ENCODE measurements at regions of chr4 and their contacts with region 1.

Region 1: GRCh38 chr4:184474263-184475095 is at the start of gene IRF2:
- DNase-seq: peak; percentile 92 to 99 (median 97)
- H3K4me3 ChIP-seq: peak within 1 kb of the TSS; percentile 96 to 100
- H3K4me3 Mint-ChIP-seq: peak within 1 kb of the TSS; percentile 95 to 100 (median 100)
- H3K27ac ChIP-seq: peak within 1 kb of the TSS; percentile 99
- H3K27ac Mint-ChIP-seq: peak within 1 kb of the TSS; percentile 96 to 100 (median 99)
- H3K4me1 ChIP-seq: peaks cover 66% of the 10 kb centered on the region
- H3K4me1 Mint-ChIP-seq: peaks cover 42 to 85% (median 57%) of the 10 kb centered on the region in 4 donors
- H3K27me3 ChIP-seq: no peaks in the 10 kb centered on the region
- H3K27me3 Mint-ChIP-seq: no peaks in the 10 kb centered on the region
- total RNA-seq, gene IRF2: 66.7 to 70.4 TPM

Region 2: DNA sequence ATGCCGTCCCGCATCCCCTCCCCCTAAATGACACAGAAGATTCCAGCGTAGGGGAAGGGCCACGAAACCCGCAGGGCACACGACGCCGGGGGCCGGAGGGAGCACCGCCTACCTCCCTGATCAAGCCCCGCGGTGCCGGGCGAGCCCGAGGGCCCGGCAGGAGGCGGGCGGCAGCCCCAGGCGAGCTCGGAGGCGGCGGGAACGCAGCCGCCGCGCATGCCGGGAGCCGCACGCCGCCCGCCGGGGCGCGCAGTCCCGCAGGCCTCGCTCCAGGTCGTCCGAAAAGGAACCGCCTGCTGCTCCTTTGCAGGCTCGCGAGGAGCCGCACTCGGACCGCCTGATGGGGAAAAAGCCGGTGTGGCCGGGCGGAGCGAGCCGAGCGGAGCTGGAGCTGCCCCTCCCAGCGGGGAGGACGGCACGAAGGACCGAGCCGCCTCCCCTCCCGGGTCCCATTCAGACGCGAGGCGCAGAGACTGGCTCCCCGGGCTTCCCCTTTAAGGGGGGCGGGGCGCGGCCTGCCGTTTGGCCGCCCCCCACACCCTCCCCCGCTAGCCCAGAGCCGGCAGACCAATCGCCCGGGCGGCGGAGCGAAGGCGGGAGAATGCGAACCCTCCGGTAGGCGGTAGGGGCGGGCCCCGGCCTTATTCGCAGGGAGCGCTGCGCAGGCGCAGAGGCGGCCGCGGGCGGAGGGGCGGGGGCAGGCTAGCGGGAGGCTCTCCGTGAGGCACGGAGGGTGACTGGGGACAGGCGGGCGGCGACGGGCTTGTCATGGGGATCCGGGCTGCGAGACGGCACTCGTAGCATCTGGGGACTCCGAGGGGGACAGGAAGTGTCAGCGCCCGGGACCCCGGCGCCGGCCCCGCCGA is 970.2 kb before region 1 on chr4:
- CTCF ChIA-PET with region 1: no interaction called
- POLR2A ChIA-PET with region 1: no interaction called
- intact Hi-C with region 1: loop called (anchors 1 kb)
- DNase-seq: peak; percentile 98 to 100 (median 99)
- H3K4me3 ChIP-seq: peak overlapping the region; percentile 50 to 73
- H3K4me3 Mint-ChIP-seq: peak overlapping the region; percentile 82 to 98 (median 94)
- H3K27ac ChIP-seq: peak overlapping the region; percentile 90
- H3K27ac Mint-ChIP-seq: peak overlapping the region; percentile 89 to 98 (median 95)
- H3K4me1 ChIP-seq: peaks cover 19% of the 10 kb centered on the region
- H3K4me1 Mint-ChIP-seq: peaks cover 9 to 27% (median 23%) of the 10 kb centered on the region in 4 donors
- H3K27me3 ChIP-seq: no peaks in the 10 kb centered on the region
- H3K27me3 Mint-ChIP-seq: no peaks in the 10 kb centered on the region

Region 3: DNA sequence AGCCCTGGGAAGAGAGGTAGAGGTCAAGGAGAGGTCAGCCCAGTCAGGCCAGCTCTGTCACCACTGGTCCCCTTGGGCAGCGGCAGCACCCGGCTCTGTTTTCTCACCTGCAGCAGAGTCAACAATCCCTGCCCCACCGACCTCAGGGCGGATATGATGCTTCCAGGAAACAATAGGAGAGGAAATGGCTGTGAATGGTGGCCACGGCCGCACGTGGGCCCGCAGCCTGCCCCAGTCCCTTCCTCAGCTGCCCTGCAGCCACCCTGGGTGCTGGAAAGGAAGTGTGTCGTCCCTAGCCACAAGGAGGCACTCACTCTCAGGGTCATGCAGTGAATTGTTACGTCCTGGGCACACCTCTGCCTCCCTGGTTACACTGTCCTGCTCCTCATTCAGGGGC is 164.3 kb before region 1 on chr4:
- CTCF ChIA-PET with region 1: interaction called, 3 read pairs
- POLR2A ChIA-PET with region 1: no interaction called
- intact Hi-C with region 1: loop called (anchors 2 kb)
- DNase-seq: peak; percentile 46 to 61 (median 48)
- H3K4me3 ChIP-seq: no peak overlapping the region
- H3K4me3 Mint-ChIP-seq: peak overlapping the region in 7 of 8 donors; percentile 27 to 63 (median 53)
- H3K27ac ChIP-seq: no peak overlapping the region
- H3K27ac Mint-ChIP-seq: peak overlapping the region; percentile 17 to 94 (median 71)
- H3K4me1 ChIP-seq: peaks cover 15% of the 10 kb centered on the region
- H3K4me1 Mint-ChIP-seq: peaks cover 18 to 29% (median 24%) of the 10 kb centered on the region in 4 donors
- H3K27me3 ChIP-seq: no peaks in the 10 kb centered on the region
- H3K27me3 Mint-ChIP-seq: no peaks in the 10 kb centered on the region

Region 4: DNA sequence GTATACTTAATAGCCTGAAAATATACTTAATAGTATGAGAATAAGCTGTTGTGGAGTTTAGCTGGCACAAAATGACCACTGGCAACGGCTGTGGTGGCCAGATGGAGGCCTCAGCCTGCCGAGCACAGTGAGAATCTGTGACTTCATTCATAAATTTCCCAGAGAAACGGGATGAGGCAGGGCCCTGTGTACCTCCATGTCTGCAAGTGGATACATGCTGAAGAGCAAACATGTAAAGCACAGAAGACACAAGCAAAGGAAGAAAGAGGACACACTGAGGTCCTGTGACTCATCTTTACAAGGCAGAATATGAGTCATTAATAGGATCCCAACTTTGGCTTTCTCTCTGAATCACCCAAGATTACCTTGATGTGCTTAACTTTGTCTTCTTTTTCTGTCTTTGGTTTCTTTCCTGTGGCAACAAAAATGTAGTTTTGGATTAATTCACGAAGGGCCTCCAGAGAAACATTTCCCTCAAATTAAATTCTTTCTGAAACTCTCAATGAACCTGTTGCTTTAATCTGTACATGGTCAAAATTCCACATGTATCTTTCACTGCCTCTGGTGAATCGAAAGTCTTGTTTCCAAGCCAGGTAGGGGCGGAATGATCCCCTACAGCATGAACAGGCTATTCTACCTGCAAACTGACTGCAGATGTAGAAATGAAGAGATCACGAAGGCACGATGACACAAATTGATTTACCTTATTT is 56.5 kb before region 1 on chr4:
- CTCF ChIA-PET with region 1: interaction called, 4 read pairs
- POLR2A ChIA-PET with region 1: interaction called, 33 read pairs
- intact Hi-C with region 1: loop called (anchors 1 kb)
- DNase-seq: peak in 3 of 5 donors; percentile 18 to 62 (median 28)
- H3K4me3 ChIP-seq: peak overlapping the region in 1 of 2 donors; percentile 63
- H3K4me3 Mint-ChIP-seq: peak overlapping the region; percentile 22 to 89 (median 82)
- H3K27ac ChIP-seq: peak overlapping the region; percentile 81
- H3K27ac Mint-ChIP-seq: peak overlapping the region; percentile 94 to 99 (median 98)
- H3K4me1 ChIP-seq: peaks cover 79% of the 10 kb centered on the region
- H3K4me1 Mint-ChIP-seq: peaks cover 55 to 83% (median 69%) of the 10 kb centered on the region in 4 donors
- H3K27me3 ChIP-seq: no peaks in the 10 kb centered on the region
- H3K27me3 Mint-ChIP-seq: no peaks in the 10 kb centered on the region

Region 5: DNA sequence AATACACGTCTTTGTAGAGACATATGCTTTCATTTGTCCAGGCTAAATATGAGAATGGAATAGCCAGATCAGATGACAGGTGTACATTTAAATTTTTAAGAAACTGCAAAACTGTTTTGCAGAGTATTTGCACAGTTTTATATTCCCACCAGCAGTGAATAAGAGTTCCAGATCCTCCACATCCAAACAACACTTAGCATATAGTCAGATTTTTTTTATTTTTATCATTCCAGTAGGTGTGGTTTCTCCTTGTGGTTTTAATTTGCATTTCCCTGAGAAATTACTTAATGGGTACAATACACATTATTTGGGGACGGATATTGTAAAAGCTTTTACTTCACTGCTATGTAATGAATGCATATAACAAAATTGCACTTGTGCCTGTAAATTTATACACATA is 56.5 kb after region 1 on chr4:
- CTCF ChIA-PET with region 1: interaction called, 3 read pairs
- POLR2A ChIA-PET with region 1: interaction called, 142 read pairs
- intact Hi-C with region 1: no loop called
- DNase-seq: no peak
- H3K4me3 ChIP-seq: no peak overlapping the region
- H3K4me3 Mint-ChIP-seq: no peak overlapping the region
- H3K27ac ChIP-seq: no peak overlapping the region
- H3K27ac Mint-ChIP-seq: peak overlapping the region in 2 of 7 donors; percentile 12 to 50
- H3K4me1 ChIP-seq: peaks cover 35% of the 10 kb centered on the region
- H3K4me1 Mint-ChIP-seq: peaks cover 24 to 39% (median 31%) of the 10 kb centered on the region in 4 donors
- H3K27me3 ChIP-seq: no peaks in the 10 kb centered on the region
- H3K27me3 Mint-ChIP-seq: no peaks in the 10 kb centered on the region

Region 6: DNA sequence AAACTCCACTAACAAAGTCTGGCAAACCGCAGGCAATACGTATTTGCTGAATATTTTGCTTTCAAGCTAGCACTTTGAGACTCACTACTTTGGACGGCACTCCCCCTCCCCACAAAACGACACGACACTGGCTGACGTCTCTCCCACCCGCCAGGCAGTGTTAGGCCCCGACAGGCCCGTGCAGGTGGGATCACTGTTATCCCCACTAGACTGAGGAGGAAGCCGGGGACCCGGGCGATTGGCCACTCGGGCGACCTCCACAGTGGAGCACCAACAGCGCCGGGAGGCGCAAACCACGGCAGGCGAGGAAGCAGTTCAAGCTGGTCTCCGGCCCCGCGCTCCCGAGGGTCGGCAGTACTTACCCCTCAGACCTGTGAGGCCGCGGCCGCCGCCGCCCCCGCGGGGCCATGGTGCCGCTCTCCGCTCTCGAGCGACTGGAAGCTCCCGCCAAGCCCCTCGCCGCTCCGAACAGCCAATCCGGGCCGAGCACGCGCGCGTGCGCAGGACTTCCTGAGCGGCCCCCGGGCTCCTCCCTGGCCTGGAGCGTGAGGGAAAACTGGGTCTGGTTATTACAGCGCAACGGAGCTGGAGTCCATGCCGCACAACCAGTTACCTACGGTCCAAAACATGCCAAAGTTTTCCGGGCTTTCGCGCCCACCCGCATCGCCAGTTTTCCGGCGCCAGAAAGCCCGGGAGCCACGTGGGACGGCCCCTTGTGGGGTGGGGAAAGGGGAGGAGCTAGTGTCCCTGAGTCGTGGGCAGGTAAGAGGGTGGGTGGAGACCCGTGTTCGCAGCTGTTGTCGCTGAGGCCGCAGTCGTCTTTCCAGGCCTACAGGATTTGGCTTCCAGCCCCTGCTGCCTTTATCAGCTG is 259.4 kb after region 1 on chr4 and contains the start of gene CENPU:
- CTCF ChIA-PET with region 1: no interaction called
- POLR2A ChIA-PET with region 1: interaction called, 12 read pairs
- intact Hi-C with region 1: loop called (anchors 1 kb)
- DNase-seq: peak; percentile 93 to 95 (median 94)
- H3K4me3 ChIP-seq: peak within 1 kb of the TSS; percentile 59 to 81
- H3K4me3 Mint-ChIP-seq: peak within 1 kb of the TSS; percentile 88 to 96 (median 92)
- H3K27ac ChIP-seq: peak within 1 kb of the TSS; percentile 56
- H3K27ac Mint-ChIP-seq: peak within 1 kb of the TSS; percentile 86 to 95 (median 92)
- H3K4me1 ChIP-seq: peaks cover 15% of the 10 kb centered on the region
- H3K4me1 Mint-ChIP-seq: peaks cover 8 to 23% (median 14%) of the 10 kb centered on the region in 4 donors
- H3K27me3 ChIP-seq: no peaks in the 10 kb centered on the region
- H3K27me3 Mint-ChIP-seq: no peaks in the 10 kb centered on the region
- total RNA-seq, gene CENPU: 2.1 to 2.2 TPM

Region 7: DNA sequence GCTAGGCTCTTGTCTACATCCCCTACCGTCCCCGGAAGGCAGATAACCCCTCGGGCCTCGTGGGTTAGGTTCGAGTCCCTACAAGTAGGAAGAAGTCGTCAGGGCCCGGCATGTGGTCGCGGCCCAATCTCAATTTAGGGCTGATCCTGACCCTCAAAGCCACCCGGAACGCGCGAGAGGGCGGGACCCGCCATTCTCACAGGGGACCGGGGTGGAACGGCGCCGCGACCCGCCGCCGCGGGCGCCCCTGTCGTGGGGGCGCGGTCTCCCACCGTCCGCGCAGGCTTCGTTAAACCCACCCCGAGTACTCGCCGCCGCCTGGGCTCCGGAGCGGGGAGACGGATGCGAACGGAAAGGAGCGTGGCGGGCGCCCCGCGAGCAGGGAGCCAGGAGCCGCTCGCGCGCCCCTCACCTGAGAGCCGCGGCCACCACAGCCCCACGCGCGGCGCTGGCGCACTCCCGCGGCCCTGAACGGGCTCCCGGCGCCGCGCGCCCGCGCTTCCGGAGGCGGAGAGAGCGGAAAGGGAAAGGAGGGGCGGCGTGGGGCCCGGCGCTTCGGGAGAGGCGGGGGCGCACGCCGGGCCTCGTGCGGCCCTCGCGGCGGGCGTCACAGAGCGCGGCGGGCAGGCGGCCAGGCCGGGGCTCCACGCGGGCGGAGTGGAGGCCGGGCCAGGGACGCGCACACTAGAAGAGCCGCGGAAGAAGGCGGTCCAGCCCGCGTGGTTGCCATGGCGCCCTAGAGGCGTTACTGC is 729.2 kb after region 1 on chr4 and contains the start of gene CFAP97:
- CTCF ChIA-PET with region 1: no interaction called
- POLR2A ChIA-PET with region 1: interaction called, 4 read pairs
- intact Hi-C with region 1: loop called (anchors 5 kb)
- DNase-seq: peak; percentile 88 to 90 (median 90)
- H3K4me3 ChIP-seq: peak within 1 kb of the TSS; percentile 47 to 83
- H3K4me3 Mint-ChIP-seq: peak within 1 kb of the TSS; percentile 91 to 99 (median 96)
- H3K27ac ChIP-seq: peak within 1 kb of the TSS; percentile 82
- H3K27ac Mint-ChIP-seq: peak within 1 kb of the TSS; percentile 98 to 99 (median 99)
- H3K4me1 ChIP-seq: peaks cover 48% of the 10 kb centered on the region
- H3K4me1 Mint-ChIP-seq: peaks cover 31 to 66% (median 48%) of the 10 kb centered on the region in 4 donors
- H3K27me3 ChIP-seq: no peaks in the 10 kb centered on the region
- H3K27me3 Mint-ChIP-seq: no peaks in the 10 kb centered on the region
- total RNA-seq, gene CFAP97: 41.6 to 41.9 TPM

Measured in CD4-positive, alpha-beta memory T cell (primary cell).